ENCODE measurements at regions of chr15 and their contacts with region 1.

Region 1: DNA sequence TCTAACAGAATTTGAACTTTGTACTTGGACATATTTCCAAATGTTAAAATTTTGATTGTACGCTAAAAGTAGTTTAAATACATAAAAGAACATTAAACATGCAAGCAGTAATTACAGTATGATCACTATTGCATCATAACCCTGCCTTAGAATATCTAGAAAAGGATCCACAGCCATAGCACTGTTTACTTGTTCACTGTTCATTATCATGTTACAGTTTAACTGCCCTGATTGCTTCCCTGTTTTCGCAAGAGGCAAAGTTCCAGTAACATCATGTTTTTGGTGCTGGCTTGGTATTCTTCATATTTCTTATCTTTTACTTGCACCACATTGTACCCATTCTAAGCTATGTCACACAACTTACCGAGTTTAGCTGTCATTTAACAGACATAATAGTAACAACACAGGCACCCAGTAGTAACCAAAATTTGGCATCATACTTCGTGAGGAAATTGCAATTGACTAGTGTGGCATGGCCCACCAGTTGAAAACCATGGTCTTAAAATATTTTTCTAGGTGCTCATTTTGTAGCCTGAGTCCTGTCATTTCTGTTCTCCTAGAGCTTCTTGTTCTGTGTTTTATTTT is 13.3 kb upstream of the TMEM87A start:
- DNase-seq: no peak
- H3K4me3 ChIP-seq: no peak overlapping the region
- H3K27ac ChIP-seq: no peak overlapping the region
- H3K4me1 ChIP-seq: no peaks in the 10 kb centered on the region
- H3K27me3 ChIP-seq: no peaks in the 10 kb centered on the region
- CTCF ChIP-seq: no peak
- EP300 ChIP-seq: no peak
- POLR2A ChIP-seq: no peak
- RAD21 ChIP-seq: no peak

Region 2: DNA sequence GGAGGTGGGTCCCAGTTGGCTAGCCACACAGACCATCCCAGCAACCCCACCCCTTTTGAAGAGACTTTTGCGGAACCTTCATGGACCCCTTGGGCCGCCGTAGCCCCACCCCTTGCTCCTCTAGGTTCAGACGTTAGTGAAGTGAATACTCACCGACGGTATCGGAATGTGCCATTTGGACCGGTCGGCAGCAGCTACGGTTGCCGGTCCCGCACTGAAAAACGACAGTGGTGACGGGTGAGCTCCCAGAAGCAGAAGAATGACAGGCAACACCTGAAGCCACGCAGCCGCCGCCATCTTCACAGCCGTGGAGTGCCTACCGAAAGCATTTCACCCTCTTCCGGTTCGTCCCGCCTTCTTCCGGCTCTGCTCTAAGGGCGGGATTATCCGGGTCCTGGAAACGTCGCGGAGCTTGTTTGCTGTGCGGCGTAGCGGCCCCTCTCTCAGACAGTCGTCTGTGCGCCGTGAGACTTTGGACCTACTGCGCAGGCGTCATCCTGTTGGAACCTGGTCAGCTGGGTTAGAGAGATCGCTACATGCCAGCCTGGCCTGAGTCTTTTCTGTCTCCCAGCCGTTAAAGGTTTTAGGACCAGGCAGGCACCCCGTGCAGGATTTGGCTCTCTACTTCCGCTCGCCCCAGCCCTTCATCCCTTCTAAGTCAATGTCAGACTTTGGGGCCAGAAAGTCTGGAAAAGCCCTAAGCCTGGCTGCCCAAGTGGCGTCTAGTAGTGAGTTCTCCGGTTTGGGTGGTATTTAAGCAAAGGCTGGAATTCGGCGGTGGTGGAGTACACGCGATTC is 13.2 kb before region 1 on chr15 and contains the starts of genes GANC and TMEM87A:
- CTCF ChIA-PET with region 1: no interaction called
- POLR2A ChIA-PET with region 1: interaction called, 27 read pairs
- DNase-seq: peak; percentile 89 to 96
- H3K4me3 ChIP-seq: peak within 1 kb of the TSS; percentile 64 to 98 (median 92)
- H3K27ac ChIP-seq: peak within 1 kb of the TSS; percentile 99
- H3K4me1 ChIP-seq: peaks cover 0 to 10% (median 3%) of the 10 kb centered on the region in 4 experiments; a peak in 3 of 7 replicates
- H3K27me3 ChIP-seq: no peaks in the 10 kb centered on the region
- CTCF ChIP-seq: no peak
- EP300 ChIP-seq: 0 out of 3 replicates have a peak, but pooled peaks of 1 of the 2 experiments have one; percentile 2
- POLR2A ChIP-seq: peak; percentile 97 to 99
- RAD21 ChIP-seq: no peak
- total RNA-seq, gene GANC: 11.8 and 14.4 TPM in 2 replicates
- total RNA-seq, gene TMEM87A: 32.9 and 33.1 TPM in 2 replicates